Naive thymus-derived CD4-positive, alpha-beta T cell (primary cell): ENCODE measurements at regions of chr2 and their contacts with region 1.

Region 1: DNA sequence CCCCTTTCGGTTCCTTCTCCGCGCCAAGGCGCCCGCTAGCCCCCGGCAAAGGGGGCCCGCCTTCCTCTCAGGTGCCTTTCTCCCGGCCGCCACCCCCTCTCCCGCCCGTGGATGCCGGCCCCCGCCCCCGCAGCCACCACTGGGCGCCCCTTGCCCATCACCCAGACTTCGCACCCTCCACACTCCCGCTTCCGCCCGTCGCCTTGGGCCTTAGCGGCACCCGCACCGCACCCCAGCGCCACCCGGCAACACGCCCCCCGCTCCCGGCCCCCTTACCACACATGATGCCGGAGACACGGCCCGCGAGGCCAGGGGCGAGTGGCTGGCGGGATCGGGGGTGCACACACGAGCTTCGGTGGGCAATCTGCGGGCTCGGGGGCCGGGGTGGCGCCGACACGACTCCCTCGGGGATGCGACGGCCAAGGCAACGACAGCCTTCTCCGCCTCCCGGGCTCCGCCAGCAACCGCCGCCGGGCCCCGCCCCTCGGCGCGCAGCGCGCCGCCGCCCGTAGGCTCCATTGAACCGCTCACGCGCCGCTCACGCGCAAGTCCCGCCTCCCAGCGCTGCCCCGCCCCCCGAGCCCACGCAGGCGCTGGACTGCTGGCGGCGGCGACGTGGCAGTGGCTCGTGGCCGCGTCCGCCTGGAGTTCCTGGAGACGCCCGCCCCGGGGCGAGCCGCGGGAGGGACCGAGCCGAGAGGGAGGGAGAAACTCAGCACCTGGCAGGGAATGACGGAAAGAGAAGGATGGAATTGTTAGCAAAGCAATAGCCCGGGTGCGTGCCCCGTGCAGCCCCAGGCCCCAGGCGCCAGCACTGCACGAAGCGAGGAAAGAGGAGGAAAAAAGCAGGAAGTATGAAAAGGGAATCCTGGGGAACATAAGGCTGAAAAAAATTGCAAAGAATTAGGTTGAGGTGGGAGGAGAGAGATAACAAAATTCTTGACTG is at the start of gene GFPT1:
- DNase-seq: peak; percentile 85 to 96 (median 91)
- ATAC-seq: peak; percentile 99
- H3K4me3 ChIP-seq: peak within 1 kb of the TSS; percentile 68
- H3K4me3 Mint-ChIP-seq: peak within 1 kb of the TSS; percentile 84 to 94 (median 88)
- H3K27ac ChIP-seq: peak within 1 kb of the TSS; percentile 83
- H3K27ac Mint-ChIP-seq: peak within 1 kb of the TSS; percentile 63 to 94 (median 86)
- H3K4me1 ChIP-seq: peaks cover 17 to 18% of the 10 kb centered on the region in 2 donors
- H3K4me1 Mint-ChIP-seq: peaks cover 28 to 53% (median 41%) of the 10 kb centered on the region in 7 donors
- H3K27me3 ChIP-seq: no peaks in the 10 kb centered on the region
- H3K27me3 Mint-ChIP-seq: no peaks in the 10 kb centered on the region
- total RNA-seq, gene GFPT1: 12.8 to 29.8 (median 16.6) TPM

Region 2: GRCh38 chr2:67437174-67437573 is 1949.9 kb before region 1 on chr2:
- CTCF ChIA-PET with region 1: no interaction called
- POLR2A ChIA-PET with region 1: no interaction called
- intact Hi-C with region 1: no loop called
- DNase-seq: no peak
- ATAC-seq: no peak
- H3K4me3 ChIP-seq: no peak overlapping the region
- H3K4me3 Mint-ChIP-seq: no peak overlapping the region
- H3K27ac ChIP-seq: no peak overlapping the region
- H3K27ac Mint-ChIP-seq: no peak overlapping the region
- H3K4me1 ChIP-seq: no peaks in the 10 kb centered on the region
- H3K4me1 Mint-ChIP-seq: no peaks in the 10 kb centered on the region
- H3K27me3 ChIP-seq: no peaks in the 10 kb centered on the region
- H3K27me3 Mint-ChIP-seq: peaks cover 0 to 45% (median 32%) of the 10 kb centered on the region in 5 donors

Region 3: GRCh38 chr2:69375494-69376353 is 11.3 kb before region 1 on chr2:
- CTCF ChIA-PET with region 1: interaction called, 3 read pairs
- POLR2A ChIA-PET with region 1: interaction called, 3 read pairs
- intact Hi-C with region 1: loop called in 1 of 2 experiments (anchors 1 kb)
- DNase-seq: peak in 5 of 9 donors; percentile 12 to 41 (median 19)
- ATAC-seq: peak; percentile 79
- H3K4me3 ChIP-seq: no peak overlapping the region
- H3K4me3 Mint-ChIP-seq: no peak overlapping the region
- H3K27ac ChIP-seq: no peak overlapping the region
- H3K27ac Mint-ChIP-seq: no peak overlapping the region
- H3K4me1 ChIP-seq: no peaks in the 10 kb centered on the region
- H3K4me1 Mint-ChIP-seq: peaks cover 14 to 31% (median 23%) of the 10 kb centered on the region in 7 donors
- H3K27me3 ChIP-seq: no peaks in the 10 kb centered on the region
- H3K27me3 Mint-ChIP-seq: no peaks in the 10 kb centered on the region